Right ventricle myocardium superior (tissue), 1 donor: ENCODE measurements at regions of chr16 and their contacts with region 1.

Region 1: DNA sequence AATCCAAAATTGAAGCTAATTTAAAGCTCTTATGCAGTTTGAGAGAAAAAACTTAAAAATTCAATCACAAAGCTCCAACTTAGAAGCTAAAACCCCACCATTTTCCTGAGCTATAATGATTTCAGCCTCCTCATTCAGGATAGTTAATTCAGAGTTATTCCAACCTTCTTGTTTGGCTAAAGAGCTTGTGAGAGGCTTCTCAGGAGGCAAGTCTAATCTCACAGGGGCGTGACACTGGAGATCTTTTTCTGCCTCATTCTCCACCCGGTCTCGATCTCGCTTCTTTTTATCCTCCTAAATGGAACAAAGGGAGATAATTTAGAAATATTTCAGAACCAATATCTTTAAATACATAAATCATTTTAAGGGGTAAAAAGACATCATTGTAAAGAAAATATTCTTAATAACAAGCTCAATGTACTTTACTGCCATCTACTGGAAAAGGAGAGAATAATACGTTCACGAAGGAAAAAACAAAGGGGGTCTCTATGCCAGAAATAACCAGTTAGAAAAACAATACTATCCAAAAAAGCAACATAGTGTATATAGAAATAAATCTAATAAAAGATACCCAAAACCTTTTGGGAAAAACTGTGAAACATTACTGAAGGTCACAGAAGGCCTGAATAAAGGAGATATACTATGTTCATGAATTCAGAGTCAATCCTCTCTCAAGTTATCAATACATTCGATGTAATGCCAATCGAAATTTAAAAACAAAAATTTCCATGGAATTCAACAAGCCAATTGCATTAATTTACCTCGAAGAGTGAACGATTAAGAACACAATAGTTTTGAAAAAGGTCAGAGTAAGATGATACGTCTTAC is 13.9 kb downstream of the BRD7 start:
- DNase-seq: no peak
- ATAC-seq: no peak

Region 2: GRCh38 chr16:50245417-50246298 is 109.2 kb before region 1 on chr16:
- intact Hi-C with region 1: loop called (anchors 10 kb)
- DNase-seq: no peak
- ATAC-seq: peak; percentile 85